ENCODE measurements at regions of chr3 and their contacts with region 1.

Region 1: DNA sequence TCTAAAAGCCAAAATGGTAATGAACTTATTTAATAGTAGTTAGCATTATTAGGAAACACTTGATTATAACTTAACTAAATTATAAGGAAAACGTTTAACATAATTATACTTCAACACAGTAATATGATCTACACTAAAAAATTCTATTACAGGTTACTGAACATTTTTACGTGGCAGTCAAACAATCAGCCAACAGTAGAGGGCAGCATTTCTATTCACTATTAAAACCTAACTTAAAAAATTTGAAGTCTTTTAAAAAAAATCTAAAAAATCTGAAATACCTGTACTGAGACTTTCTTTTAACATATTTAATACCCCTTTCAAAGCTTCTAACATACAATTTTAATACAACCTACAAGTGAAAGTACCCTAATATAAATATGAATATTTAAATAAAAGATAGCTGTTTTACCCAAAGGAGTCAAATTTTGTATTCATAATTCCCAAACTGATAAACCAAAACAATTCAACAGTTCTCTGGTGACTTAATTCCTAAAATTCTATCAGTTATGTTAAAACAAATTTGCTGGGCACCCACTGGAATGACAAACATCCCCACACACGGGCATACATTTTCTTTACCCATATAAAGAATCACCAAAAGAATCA is 41.5 kb downstream of the DLG1 start:
- DNase-seq: peak; percentile 56
- ATAC-seq: no peak
- H3K4me3 Mint-ChIP-seq: no peak overlapping the region
- H3K27ac Mint-ChIP-seq: no peak overlapping the region
- H3K4me1 Mint-ChIP-seq: peaks cover 25% of the 10 kb centered on the region
- H3K27me3 Mint-ChIP-seq: no peaks in the 10 kb centered on the region

Region 2: DNA sequence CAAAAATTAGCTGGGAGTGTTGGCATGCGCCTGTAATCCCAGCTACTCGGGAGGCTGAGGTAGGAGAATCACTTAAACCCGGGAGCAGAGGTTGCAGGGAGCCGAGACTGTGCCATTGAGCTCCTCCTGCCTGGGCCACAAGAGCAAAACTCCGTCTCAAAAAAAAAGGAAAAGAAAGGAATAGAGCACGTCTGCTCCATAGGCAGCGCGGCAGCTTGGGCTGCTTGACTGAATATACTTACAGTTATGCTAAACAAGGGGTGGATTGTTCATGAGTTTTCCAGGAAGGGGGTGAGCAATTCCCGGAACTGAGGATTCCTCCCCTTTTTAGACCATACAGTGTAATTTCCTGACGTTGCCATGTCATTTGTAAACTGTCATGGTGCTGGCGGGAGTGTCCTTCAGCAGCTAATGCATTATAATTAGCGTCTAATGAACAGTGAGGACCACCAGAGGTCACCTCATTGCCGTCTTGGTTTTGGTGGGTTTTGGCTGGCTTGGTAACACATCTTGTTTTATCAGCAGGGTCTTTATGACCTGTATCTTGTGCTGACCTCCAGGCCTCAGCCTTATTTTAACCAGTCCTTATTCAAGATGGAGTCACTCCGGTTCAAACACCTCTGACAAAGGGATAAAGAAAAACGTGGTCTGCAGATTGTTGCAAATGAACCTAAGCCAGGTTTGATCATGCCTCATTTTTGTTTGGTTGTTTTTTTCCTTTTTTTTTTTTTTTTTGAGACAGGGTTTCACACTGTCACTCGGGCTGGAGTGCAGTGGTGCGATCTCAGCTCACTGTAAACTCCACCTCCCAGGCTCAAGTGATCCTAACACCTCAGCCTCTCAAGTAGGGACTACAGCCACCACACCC is 414.1 kb before region 1 on chr3:
- CTCF ChIA-PET with region 1: no interaction called
- POLR2A ChIA-PET with region 1: no interaction called
- DNase-seq: no peak
- ATAC-seq: no peak
- H3K4me3 Mint-ChIP-seq: no peak overlapping the region
- H3K27ac Mint-ChIP-seq: no peak overlapping the region
- H3K4me1 Mint-ChIP-seq: no peaks in the 10 kb centered on the region
- H3K27me3 Mint-ChIP-seq: no peaks in the 10 kb centered on the region

Region 3: GRCh38 chr3:197242784-197243432 is 14.0 kb before region 1 on chr3:
- CTCF ChIA-PET with region 1: interaction called, 10 read pairs
- POLR2A ChIA-PET with region 1: no interaction called
- DNase-seq: no peak
- ATAC-seq: no peak
- H3K4me3 Mint-ChIP-seq: no peak overlapping the region
- H3K27ac Mint-ChIP-seq: no peak overlapping the region
- H3K4me1 Mint-ChIP-seq: peaks cover 13% of the 10 kb centered on the region
- H3K27me3 Mint-ChIP-seq: no peaks in the 10 kb centered on the region

Region 4: GRCh38 chr3:197283045-197283444 is 26.1 kb after region 1 on chr3:
- CTCF ChIA-PET with region 1: interaction called, 12 read pairs
- POLR2A ChIA-PET with region 1: no interaction called
- DNase-seq: no peak
- ATAC-seq: no peak
- H3K4me3 Mint-ChIP-seq: no peak overlapping the region
- H3K27ac Mint-ChIP-seq: no peak overlapping the region
- H3K4me1 Mint-ChIP-seq: peaks cover 3% of the 10 kb centered on the region
- H3K27me3 Mint-ChIP-seq: no peaks in the 10 kb centered on the region

Region 5: DNA sequence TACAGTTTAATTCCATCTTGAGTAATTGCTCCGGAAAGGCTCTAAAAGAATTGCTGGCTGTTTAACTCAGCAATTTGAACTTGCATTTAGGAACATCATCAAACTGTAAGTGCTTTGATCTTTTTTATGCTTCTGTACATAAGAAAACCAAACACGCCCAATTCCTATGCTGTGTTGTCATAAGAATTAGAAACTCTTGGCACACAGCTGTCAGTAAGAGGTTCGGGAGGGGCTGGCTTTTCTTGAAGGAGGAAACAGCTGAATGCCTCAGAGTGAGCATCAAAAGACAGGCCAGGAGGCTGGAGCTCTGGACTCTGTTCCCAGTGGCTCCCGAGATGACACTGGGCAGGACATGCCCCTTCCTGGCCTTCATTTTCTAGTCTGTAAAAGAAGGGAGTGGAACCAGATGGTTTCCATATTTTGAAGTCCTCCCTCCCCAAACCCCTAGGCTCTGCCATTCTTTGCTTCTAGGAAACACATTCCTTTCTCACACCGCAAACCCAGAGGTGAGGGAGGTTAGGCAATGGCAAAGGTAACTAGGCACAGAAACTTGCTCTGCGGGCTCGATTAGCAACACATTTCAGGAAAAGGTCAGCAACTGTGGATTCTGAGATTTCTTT is 115.2 kb after region 1 on chr3:
- CTCF ChIA-PET with region 1: no interaction called
- POLR2A ChIA-PET with region 1: no interaction called
- DNase-seq: no peak
- ATAC-seq: no peak
- H3K4me3 Mint-ChIP-seq: no peak overlapping the region
- H3K27ac Mint-ChIP-seq: no peak overlapping the region
- H3K4me1 Mint-ChIP-seq: no peaks in the 10 kb centered on the region
- H3K27me3 Mint-ChIP-seq: peaks cover 8% of the 10 kb centered on the region

Region 6: DNA sequence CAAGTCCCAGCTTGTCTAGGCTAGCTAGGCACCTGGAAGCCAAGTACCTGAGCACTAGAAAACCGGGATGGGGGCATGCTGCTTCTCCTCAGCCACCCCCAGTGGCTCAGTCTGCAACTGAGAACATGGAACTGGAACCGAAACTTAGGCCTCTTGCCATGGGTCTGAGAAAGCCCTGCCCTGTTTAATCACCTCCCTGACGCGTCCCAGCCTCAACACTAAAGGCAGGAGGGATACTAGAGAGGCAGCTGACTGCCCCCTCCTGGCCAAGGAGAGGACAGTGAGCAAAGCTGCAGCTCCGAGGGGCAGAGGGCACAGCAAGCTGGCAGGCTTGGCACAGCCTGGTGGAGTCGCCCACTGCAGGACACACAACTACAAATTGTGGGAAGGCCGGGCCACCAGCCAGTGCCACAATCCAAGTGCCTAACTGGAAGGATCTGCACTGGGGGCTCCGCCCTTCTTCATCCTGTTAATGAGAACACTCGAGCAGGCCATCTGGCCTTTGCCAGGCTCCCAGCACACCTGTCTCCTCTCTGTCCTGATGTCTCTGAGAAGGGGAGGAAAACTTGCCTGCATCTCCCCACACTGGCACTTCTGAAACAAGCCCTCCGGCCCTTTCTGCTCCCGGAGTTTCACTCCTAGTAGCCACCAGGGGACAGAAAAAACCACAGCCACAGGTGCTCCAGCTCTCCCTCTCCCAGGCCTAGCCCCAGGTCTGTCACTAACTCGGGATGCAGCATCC is 245.1 kb after region 1 on chr3:
- CTCF ChIA-PET with region 1: interaction called, 36 read pairs
- POLR2A ChIA-PET with region 1: no interaction called
- DNase-seq: peak; percentile 54
- ATAC-seq: peak; percentile 63
- H3K4me3 Mint-ChIP-seq: no peak overlapping the region
- H3K27ac Mint-ChIP-seq: no peak overlapping the region
- H3K4me1 Mint-ChIP-seq: peaks cover 12% of the 10 kb centered on the region
- H3K27me3 Mint-ChIP-seq: no peaks in the 10 kb centered on the region